ENCODE measurements at regions of chr17 and their contacts with region 1.

Region 1: GRCh38 chr17:41548844-41549595 is 20.9 kb upstream of the KRT19 start:
- DNase-seq: peak; percentile 92
- ATAC-seq: peak; percentile 91
- H3K4me3 Mint-ChIP-seq: peak overlapping the region; percentile 23
- H3K27ac Mint-ChIP-seq: peak overlapping the region; percentile 77
- H3K4me1 Mint-ChIP-seq: peaks cover 20% of the 10 kb centered on the region
- H3K27me3 Mint-ChIP-seq: peaks cover 10% of the 10 kb centered on the region

Region 2: DNA sequence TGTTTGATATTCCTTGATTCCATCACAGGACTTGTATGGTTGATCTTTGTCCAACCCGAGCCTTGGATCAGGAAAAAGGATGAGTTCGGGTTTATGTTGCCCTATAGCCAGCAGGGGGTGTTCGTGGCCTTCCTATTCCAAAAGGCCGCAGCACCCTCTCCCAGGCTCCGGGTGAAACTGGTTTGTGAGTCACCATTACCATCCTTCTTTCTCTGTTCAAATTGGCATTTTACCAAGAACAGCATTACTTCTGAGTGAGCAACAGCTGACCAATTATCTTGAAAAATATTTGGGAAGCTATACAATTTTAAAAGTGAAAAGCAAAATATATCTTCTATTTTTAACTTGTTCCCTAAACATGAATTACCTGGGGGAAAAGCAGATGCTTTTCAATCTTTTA is 639.7 kb before region 1 on chr17:
- CTCF ChIA-PET with region 1: interaction called, 28 read pairs
- POLR2A ChIA-PET with region 1: no interaction called
- DNase-seq: peak; percentile 71
- ATAC-seq: peak; percentile 82
- H3K4me3 Mint-ChIP-seq: no peak overlapping the region
- H3K27ac Mint-ChIP-seq: no peak overlapping the region
- H3K4me1 Mint-ChIP-seq: no peaks in the 10 kb centered on the region
- H3K27me3 Mint-ChIP-seq: peaks cover 24% of the 10 kb centered on the region

Region 3: GRCh38 chr17:41494524-41494923 is 54.5 kb before region 1 on chr17:
- CTCF ChIA-PET with region 1: interaction called, 12 read pairs
- POLR2A ChIA-PET with region 1: no interaction called
- DNase-seq: no peak
- ATAC-seq: no peak
- H3K4me3 Mint-ChIP-seq: no peak overlapping the region
- H3K27ac Mint-ChIP-seq: no peak overlapping the region
- H3K4me1 Mint-ChIP-seq: peaks cover 13% of the 10 kb centered on the region
- H3K27me3 Mint-ChIP-seq: no peaks in the 10 kb centered on the region

Region 4: DNA sequence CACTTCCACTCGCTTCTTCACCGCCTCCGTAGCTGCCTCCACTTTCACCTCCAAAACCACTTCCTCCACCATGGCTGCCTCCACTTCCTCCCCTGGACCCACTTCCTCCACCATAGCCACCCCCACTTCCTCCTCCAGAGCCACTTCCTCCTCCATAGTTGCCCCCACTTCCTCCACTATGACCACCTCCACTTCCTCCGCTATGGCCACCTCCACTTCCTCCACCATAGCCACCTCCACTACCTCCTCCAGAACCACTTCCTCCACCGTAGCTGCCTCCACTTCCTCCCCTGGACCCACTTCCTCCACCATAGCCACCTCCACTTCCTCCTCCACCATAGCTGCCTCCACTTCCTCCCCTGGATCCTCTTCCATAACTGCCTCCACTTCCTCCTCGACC is 18.3 kb after region 1 on chr17:
- CTCF ChIA-PET with region 1: interaction called, 31 read pairs
- POLR2A ChIA-PET with region 1: no interaction called
- DNase-seq: peak; percentile 28
- ATAC-seq: no peak
- H3K4me3 Mint-ChIP-seq: no peak overlapping the region
- H3K27ac Mint-ChIP-seq: peak overlapping the region; percentile 87
- H3K4me1 Mint-ChIP-seq: peaks cover 8% of the 10 kb centered on the region
- H3K27me3 Mint-ChIP-seq: peaks cover 26% of the 10 kb centered on the region

Region 5: DNA sequence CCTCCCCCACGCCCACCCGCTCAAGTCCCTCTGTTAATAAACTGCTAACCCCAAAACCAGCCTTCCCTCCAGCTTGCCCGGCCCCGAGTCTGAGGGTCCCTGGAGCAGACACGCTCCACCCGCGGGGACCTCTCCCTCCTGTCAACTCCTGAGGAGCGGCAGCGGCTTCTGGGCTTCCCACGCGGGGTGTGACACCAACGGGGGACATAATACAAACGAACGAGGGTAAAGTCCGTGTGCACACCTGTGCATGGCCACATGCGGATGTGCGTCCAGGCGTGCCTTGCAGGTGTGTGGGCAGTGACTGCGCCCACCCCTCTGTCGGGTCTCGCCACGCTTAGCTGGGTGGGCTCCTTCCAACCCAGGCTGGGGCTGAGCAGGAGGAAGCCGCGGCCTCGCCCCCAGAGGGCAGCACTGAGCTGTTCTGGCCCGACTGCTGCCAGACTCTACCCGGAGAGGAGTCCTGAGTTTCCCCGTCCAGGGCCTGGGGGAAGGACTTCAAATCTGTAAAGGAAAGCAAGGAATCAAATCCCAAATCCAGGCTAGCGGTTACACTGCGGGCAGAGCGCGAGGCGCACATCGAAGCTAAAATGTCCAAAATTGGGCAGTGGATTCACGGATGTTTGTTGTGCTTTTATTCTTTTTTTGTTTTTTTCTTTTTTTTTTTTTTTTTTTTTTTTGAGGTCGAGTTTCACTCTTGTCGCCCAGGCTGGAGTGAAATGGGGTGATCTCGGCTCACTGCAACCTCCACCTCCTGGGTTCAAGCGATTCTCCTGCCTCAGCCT is 99.6 kb after region 1 on chr17:
- CTCF ChIA-PET with region 1: interaction called, 107 read pairs
- POLR2A ChIA-PET with region 1: interaction called, 6 read pairs
- DNase-seq: peak; percentile 87
- ATAC-seq: peak; percentile 89
- H3K4me3 Mint-ChIP-seq: peak overlapping the region; percentile 42
- H3K27ac Mint-ChIP-seq: peak overlapping the region; percentile 54
- H3K4me1 Mint-ChIP-seq: peaks cover 13% of the 10 kb centered on the region
- H3K27me3 Mint-ChIP-seq: no peaks in the 10 kb centered on the region

Region 6: DNA sequence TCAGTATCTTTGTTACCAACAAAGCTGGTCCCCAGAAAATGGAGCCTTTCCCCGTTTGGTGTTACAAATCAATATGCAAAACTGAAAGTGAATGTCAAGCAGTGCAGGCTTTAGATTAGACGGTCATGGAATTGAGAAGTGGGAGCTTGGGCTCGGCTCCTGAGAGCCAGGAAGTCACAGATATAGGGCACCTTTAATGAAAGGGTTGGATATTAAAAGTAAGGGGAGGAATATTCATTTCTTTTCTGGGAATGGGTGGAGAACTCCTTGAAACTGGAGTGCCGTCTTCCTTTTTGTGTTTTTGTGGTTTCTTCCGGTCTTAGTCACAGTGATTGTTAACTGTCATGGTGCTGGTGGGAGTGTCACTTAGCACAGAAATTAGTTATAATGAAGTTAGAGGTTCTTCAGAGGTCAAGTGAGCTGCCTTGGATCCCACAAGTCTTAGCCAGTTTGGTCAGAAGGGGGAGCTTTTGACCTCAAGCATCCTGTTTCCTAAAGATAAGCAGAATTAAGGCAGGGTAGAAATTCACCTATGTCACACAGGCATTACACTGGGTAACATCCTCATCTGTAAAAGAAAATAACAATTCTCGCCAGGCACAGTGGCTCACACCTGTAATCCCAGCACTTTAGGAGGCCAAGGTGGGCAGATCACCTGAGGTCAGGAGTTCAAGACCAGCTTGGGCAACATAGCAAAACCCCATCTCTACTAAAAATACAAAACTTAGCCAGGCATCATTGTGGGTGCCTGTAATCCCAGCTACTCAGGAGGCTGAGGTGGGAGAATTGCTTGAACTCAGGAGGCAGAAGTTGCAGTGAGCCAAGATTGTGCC is 130.1 kb after region 1 on chr17:
- CTCF ChIA-PET with region 1: interaction called, 10 read pairs
- POLR2A ChIA-PET with region 1: no interaction called
- DNase-seq: peak; percentile 91
- ATAC-seq: peak; percentile 91
- H3K4me3 Mint-ChIP-seq: peak overlapping the region; percentile 84
- H3K27ac Mint-ChIP-seq: peak overlapping the region; percentile 94
- H3K4me1 Mint-ChIP-seq: peaks cover 62% of the 10 kb centered on the region
- H3K27me3 Mint-ChIP-seq: no peaks in the 10 kb centered on the region

Measured in activated CD8-positive, alpha-beta T cell treated with anti-CD3 and anti-CD28 coated beads, Interleukin-2, amount 10 ng/mL, durations not matched to agents 7 days and 5 days (primary cell).